ENCODE measurements at regions of chr16 and their contacts with region 1.

Region 1: DNA sequence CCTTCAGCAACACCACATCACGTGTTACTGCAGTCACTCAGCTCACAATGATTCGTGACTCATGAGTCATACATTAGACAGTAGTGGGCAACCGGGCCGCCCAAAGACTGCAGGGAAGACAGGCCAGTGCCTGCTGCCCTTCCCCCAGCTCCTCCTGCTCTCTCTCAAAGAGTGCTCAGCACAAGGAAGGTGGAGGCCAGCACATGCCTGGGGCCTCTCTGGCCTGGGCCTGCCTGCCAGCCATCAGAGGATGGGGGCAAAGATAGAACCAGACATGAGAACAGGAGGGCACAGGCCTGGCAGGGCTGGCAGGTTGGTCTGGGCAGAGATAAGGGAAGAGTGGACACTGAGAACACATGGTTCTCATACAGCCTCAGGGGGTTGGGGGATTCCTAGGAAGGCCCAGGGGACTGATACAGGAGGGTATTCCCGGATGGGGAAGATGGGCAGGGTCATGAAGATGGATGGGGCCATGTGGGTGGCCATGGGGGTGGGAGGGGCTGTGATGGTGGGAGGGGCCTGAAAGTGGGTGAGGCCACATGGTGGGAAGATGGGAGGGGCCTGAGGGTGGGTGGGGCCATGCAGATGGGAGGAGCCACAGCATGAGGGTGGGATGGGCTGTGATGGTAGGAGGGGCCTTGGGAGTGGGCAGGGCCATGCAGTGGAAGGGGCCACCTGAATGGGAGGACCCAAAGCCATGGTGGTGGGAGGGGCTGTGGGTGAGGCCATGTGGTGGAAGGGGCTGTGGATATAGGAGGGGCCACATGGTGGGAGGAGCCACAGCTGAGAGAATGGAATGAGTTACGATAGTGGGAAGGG is 29.0 kb downstream of the KATNB1 start:
- DNase-seq: no peak
- ATAC-seq: peak; percentile 36 to 62

Region 2: GRCh38 chr16:57795431-57795878 is 30.9 kb after region 1 on chr16:
- intact Hi-C with region 1: loop called in 1 of 2 experiments (anchors 5 kb)
- DNase-seq: no peak
- ATAC-seq: no peak